ENCODE measurements at regions of chr19 and their contacts with region 1.

Region 1: GRCh38 chr19:10292206-10292788 is 2.5 kb downstream of the ICAM5 start:
- DNase-seq: peak; percentile 87
- ATAC-seq: peak; percentile 59
- H3K4me3 Mint-ChIP-seq: peak overlapping the region; percentile 73
- H3K27ac Mint-ChIP-seq: no peak overlapping the region
- H3K4me1 Mint-ChIP-seq: peaks cover 62% of the 10 kb centered on the region
- H3K27me3 Mint-ChIP-seq: peaks cover 75% of the 10 kb centered on the region
- CTCF ChIP-seq: no peak

Region 2: GRCh38 chr19:10259162-10259905 is 33.0 kb before region 1 on chr19:
- CTCF ChIA-PET with region 1: interaction called, 20 read pairs
- POLR2A ChIA-PET with region 1: interaction called, 8 read pairs
- intact Hi-C with region 1: no loop called
- DNase-seq: peak; percentile 100
- ATAC-seq: peak; percentile 80
- H3K4me3 Mint-ChIP-seq: peak overlapping the region; percentile 24
- H3K27ac Mint-ChIP-seq: peak overlapping the region; percentile 92
- H3K4me1 Mint-ChIP-seq: peaks cover 33% of the 10 kb centered on the region
- H3K27me3 Mint-ChIP-seq: no peaks in the 10 kb centered on the region
- CTCF ChIP-seq: peak; percentile 77

Region 3: GRCh38 chr19:10279737-10280442 is 12.4 kb before region 1 on chr19:
- CTCF ChIA-PET with region 1: no interaction called
- POLR2A ChIA-PET with region 1: interaction called, 107 read pairs
- intact Hi-C with region 1: no loop called
- DNase-seq: no peak
- ATAC-seq: no peak
- H3K4me3 Mint-ChIP-seq: no peak overlapping the region
- H3K27ac Mint-ChIP-seq: peak overlapping the region; percentile 34
- H3K4me1 Mint-ChIP-seq: peaks cover 16% of the 10 kb centered on the region
- H3K27me3 Mint-ChIP-seq: no peaks in the 10 kb centered on the region
- CTCF ChIP-seq: no peak

Region 4: DNA sequence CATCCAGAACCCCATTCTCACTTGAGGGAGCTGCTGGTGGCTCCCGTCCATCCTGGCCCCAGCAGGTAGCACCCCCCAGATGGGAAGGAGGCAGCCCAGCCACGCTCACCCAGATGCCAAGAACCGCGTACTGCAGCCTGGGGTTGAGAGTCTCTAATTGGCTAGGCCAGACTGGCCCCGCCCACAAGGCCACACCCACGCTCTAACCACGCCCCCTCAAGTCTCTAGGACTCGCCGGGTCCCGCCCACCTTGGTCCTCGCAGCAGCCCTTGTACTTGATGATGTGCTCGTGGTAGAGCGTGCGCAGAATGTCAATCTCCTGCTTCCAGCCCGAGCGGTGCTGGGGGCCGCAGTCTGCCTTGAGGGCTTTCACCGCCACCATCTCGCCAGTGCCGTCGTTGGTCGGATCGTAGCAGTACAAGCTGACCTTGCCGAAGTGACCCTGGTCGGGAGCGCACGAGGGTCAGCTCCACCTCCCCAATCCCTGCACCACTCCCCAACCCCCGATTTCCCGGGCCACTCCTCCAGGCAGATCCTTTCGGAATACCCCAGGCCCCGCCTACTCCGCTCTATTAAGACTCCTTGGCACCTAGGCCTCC is 61.6 kb after region 1 on chr19:
- CTCF ChIA-PET with region 1: no interaction called
- POLR2A ChIA-PET with region 1: no interaction called
- intact Hi-C with region 1: no loop called
- DNase-seq: peak; percentile 71
- ATAC-seq: peak; percentile 80
- H3K4me3 Mint-ChIP-seq: no peak overlapping the region
- H3K27ac Mint-ChIP-seq: no peak overlapping the region
- H3K4me1 Mint-ChIP-seq: no peaks in the 10 kb centered on the region
- H3K27me3 Mint-ChIP-seq: no peaks in the 10 kb centered on the region
- CTCF ChIP-seq: no peak